ENCODE measurements at regions of chr15 and their contacts with region 1.

Region 1: DNA sequence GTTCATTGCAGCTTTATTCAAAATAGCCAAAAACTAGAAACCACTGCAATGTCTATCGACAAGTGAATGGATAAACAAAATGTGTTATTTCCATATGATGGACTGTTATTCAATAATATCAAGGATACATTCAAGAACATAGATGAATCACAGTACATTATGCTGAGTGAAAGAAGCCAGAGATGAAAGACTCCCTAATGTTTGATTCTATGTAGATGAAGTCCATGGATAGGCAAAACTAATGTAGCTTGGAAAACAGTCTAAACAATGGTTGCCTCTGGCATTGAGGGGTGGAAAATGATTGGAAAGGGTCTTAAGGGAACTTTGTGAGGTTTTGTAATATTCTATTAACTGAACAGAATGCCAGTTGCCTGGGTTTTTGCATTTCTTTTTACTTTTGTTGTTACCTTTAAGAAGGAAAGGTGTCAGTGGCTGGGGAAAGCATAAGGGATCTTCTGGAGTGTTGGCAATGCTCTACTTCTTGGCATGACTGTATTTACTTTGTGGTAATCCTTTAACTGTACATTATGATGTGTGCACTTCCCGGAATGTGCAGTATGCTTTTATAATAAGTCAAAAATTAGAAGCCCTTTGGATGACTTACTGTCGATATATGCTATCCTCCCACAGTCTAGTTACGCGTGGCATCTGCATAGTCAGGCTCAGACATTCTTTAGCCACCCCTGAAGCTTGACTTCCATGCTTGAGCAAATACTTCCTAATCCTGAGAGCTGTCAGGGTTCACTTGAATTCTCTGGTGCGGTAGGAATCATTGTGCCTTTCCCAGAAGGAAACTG is 20.5 kb upstream of the ATP10A start:
- DNase-seq: no peak
- H3K4me3 ChIP-seq: no peak overlapping the region
- H3K27ac ChIP-seq: no peak overlapping the region
- H3K4me1 ChIP-seq: no peaks in the 10 kb centered on the region
- H3K27me3 ChIP-seq: no peaks in the 10 kb centered on the region
- CTCF ChIP-seq: no peak

Region 2: GRCh38 chr15:25838191-25838870 is 45.3 kb before region 1 on chr15:
- CTCF ChIA-PET with region 1: no interaction called
- dilution Hi-C with region 1: loop called (anchors 5 kb)
- in situ Hi-C with region 1: no loop called
- intact Hi-C with region 1: no loop called
- DNase-seq: no peak
- H3K4me3 ChIP-seq: no peak overlapping the region
- H3K27ac ChIP-seq: no peak overlapping the region
- H3K4me1 ChIP-seq: no peaks in the 10 kb centered on the region
- H3K27me3 ChIP-seq: no peaks in the 10 kb centered on the region
- CTCF ChIP-seq: no peak

Measured in mammary epithelial cell (primary cell).